AG04449 (cell line): ENCODE measurements at regions of chr10 and their contacts with region 1.

Region 1: GRCh38 chr10:97037365-97038361 is 148.1 kb downstream of the SLIT1 start:
- DNase-seq: no peak
- H3K4me3 ChIP-seq: peak overlapping the region; percentile 51
- CTCF ChIP-seq: peak; percentile 88

Region 2: GRCh38 chr10:97016728-97017473 is 20.8 kb before region 1 on chr10:
- CTCF ChIA-PET with region 1: interaction called, 25 read pairs
- POLR2A ChIA-PET with region 1: no interaction called
- DNase-seq: no peak
- H3K4me3 ChIP-seq: no peak overlapping the region
- CTCF ChIP-seq: no peak

Region 3: GRCh38 chr10:97048649-97049427 is 11.2 kb after region 1 on chr10:
- CTCF ChIA-PET with region 1: interaction called, 45 read pairs
- POLR2A ChIA-PET with region 1: interaction called, 4 read pairs
- DNase-seq: no peak
- H3K4me3 ChIP-seq: no peak overlapping the region
- CTCF ChIP-seq: no peak

Region 4: DNA sequence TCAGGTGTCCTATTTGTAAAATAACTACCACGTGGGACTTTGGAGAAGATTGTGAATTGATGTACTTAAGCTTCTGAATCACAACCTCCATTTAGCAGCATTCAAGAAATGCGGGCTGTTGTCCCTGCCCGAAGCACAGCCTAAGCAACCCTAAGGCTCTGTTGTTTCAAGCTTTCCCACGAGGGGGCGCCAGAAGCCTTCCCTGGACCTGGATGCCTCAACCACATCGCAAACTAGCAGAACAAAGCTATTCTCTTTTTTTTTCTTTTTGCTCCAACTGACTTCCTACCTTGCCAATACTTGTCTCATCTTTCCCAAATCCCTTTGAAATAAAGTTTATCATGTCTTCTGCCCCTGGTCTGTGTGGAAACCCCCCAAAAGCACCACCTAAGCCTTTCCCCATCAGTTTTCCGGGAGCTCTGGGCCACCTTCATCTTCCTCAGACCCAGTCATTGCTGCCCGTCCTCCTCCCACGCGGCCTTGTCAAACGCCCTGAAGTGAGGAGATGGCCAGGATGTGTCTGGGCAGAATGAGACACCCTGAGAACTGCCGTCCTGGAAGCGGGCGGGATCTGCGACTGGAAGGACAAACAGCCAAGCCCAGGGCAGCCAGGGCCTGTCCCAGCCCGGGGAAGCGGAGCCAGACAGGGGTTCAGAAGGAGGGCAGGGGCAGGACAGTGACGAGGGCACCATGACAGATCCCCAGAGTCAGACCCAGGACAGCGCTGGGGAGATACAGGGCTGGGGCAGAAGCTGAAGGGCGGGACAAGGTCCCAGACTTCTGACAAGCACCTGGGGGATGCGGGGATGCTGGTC is 35.4 kb after region 1 on chr10:
- CTCF ChIA-PET with region 1: interaction called, 29 read pairs
- POLR2A ChIA-PET with region 1: no interaction called
- DNase-seq: peak; percentile 12
- H3K4me3 ChIP-seq: no peak overlapping the region
- CTCF ChIP-seq: peak; percentile 90

Region 5: GRCh38 chr10:97210543-97210961 is 172.9 kb after region 1 on chr10:
- CTCF ChIA-PET with region 1: interaction called, 47 read pairs
- POLR2A ChIA-PET with region 1: no interaction called
- DNase-seq: no peak
- H3K4me3 ChIP-seq: no peak overlapping the region
- CTCF ChIP-seq: peak; percentile 91